ENCODE measurements at regions of chr3 and their contacts with region 1.

Region 1: DNA sequence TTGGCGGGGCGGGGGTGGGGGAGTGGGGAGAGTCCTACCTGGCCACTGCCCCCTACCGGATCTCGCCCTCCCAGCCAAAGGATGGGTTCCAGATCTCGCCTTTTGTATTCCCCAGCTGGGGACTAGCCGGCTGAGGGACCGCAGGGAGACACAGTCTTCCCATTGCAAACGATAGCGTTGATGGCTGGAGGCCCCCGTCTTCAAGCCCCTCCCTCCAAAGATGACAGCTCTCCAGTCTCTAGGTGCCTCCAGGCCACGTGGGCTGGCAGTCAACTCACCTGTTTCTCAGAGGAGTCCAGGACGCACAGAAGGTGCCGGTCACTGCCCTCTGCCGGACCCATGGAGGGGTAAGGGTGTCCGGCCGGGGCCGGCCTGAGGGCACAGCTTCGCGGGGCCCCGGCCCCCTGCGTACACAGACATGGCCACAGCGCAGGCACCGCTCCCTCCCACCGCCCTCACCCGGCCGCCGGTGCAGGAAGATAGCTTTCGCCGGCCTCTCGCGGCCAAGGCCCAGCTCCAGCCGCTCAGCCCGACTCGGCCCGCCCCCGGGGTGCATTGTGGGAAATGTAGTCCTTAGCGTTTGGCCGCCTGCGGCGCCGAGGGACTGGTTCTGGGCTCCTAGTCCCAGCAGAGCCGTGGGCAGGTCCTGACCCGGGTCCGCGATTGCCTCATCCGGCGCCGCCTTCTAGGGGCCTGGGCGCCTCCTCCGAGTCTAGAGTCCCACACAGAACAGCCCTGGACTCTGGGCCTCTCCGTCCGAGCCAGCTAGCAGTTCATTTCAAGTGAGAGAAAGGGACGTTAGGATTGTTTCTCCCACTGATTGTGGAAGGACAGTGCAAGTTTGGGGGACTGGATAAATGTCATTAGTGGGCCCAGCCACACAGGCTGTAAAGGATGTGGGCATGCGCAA is at the start of gene MON1A:
- DNase-seq: peak; percentile 92
- ATAC-seq: peak; percentile 97
- H3K4me3 Mint-ChIP-seq: peak within 1 kb of the TSS; percentile 85
- H3K27ac Mint-ChIP-seq: peak within 1 kb of the TSS; percentile 90
- H3K4me1 Mint-ChIP-seq: peaks cover 19% of the 10 kb centered on the region
- H3K27me3 Mint-ChIP-seq: no peaks in the 10 kb centered on the region
- total RNA-seq, gene MON1A: 7.5 to 8.3 TPM

Region 2: GRCh38 chr3:49906004-49906743 is 23.4 kb before region 1 on chr3:
- CTCF ChIA-PET with region 1: interaction called, 5 read pairs
- POLR2A ChIA-PET with region 1: no interaction called
- intact Hi-C with region 1: loop called in 1 of 2 experiments (anchors 1 kb)
- DNase-seq: peak; percentile 77
- ATAC-seq: peak; percentile 45
- H3K4me3 Mint-ChIP-seq: peak overlapping the region; percentile 8
- H3K27ac Mint-ChIP-seq: peak overlapping the region; percentile 48
- H3K4me1 Mint-ChIP-seq: peaks cover 22% of the 10 kb centered on the region
- H3K27me3 Mint-ChIP-seq: no peaks in the 10 kb centered on the region

Region 3: GRCh38 chr3:49939858-49940666 is 10.5 kb after region 1 on chr3 and contains the start of gene RBM6:
- CTCF ChIA-PET with region 1: interaction called, 5 read pairs
- POLR2A ChIA-PET with region 1: interaction called, 8 read pairs
- intact Hi-C with region 1: loop called (anchors 1 kb)
- DNase-seq: peak; percentile 98
- ATAC-seq: peak; percentile 99
- H3K4me3 Mint-ChIP-seq: peak within 1 kb of the TSS; percentile 98
- H3K27ac Mint-ChIP-seq: peak within 1 kb of the TSS; percentile 91
- H3K4me1 Mint-ChIP-seq: peaks cover 20% of the 10 kb centered on the region
- H3K27me3 Mint-ChIP-seq: no peaks in the 10 kb centered on the region
- total RNA-seq, gene RBM6: 69.3 to 75.1 TPM